ENCODE measurements at regions of chr12 and their contacts with region 1.

Region 1: GRCh38 chr12:123365025-123365917 is 624 bp upstream of the SBNO1 start:
- DNase-seq: peak; percentile 98
- H3K4me3 Mint-ChIP-seq: peak overlapping the region; percentile 85
- H3K27ac Mint-ChIP-seq: peak overlapping the region; percentile 94
- H3K4me1 Mint-ChIP-seq: no peaks in the 10 kb centered on the region
- H3K27me3 Mint-ChIP-seq: no peaks in the 10 kb centered on the region
- CTCF ChIP-seq: peak; percentile 59

Region 2: GRCh38 chr12:123271001-123271729 is 94.1 kb before region 1 on chr12:
- CTCF ChIA-PET with region 1: interaction called, 8 read pairs
- POLR2A ChIA-PET with region 1: interaction called, 3 read pairs
- intact Hi-C with region 1: loop called (anchors 2 kb)
- DNase-seq: peak; percentile 64
- H3K4me3 Mint-ChIP-seq: peak overlapping the region; percentile 80
- H3K27ac Mint-ChIP-seq: no peak overlapping the region
- H3K4me1 Mint-ChIP-seq: peaks cover 11% of the 10 kb centered on the region
- H3K27me3 Mint-ChIP-seq: no peaks in the 10 kb centered on the region
- CTCF ChIP-seq: peak; percentile 64

Region 3: GRCh38 chr12:123354600-123354999 is 10.7 kb before region 1 on chr12:
- CTCF ChIA-PET with region 1: interaction called, 3 read pairs
- POLR2A ChIA-PET with region 1: interaction called, 14 read pairs
- intact Hi-C with region 1: no loop called
- DNase-seq: no peak
- H3K4me3 Mint-ChIP-seq: no peak overlapping the region
- H3K27ac Mint-ChIP-seq: no peak overlapping the region
- H3K4me1 Mint-ChIP-seq: peaks cover 6% of the 10 kb centered on the region
- H3K27me3 Mint-ChIP-seq: no peaks in the 10 kb centered on the region
- CTCF ChIP-seq: no peak

Region 4: DNA sequence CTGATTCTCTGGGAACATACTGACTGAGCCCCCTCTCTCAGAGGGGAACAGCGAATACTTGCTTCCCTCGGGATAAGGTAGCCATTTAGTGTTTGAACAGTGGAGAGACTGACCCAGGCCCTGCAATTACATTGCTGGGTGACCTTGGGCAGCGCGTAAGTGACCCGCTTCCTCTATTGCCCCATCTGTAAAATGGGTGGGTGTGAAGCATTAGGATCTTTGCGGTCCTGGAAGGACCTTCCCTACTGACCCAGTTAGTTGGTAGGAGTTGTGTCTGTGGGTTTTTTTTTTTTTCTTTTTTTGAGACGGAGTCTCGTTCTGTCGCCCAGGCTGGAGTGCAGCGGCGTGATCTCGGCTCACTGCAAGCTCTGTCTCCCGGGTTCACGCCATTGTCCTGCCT is 17.4 kb after region 1 on chr12:
- CTCF ChIA-PET with region 1: interaction called, 9 read pairs
- POLR2A ChIA-PET with region 1: interaction called, 127 read pairs
- intact Hi-C with region 1: loop called (anchors 1 kb)
- DNase-seq: no peak
- H3K4me3 Mint-ChIP-seq: peak overlapping the region; percentile 91
- H3K27ac Mint-ChIP-seq: no peak overlapping the region
- H3K4me1 Mint-ChIP-seq: peaks cover 9% of the 10 kb centered on the region
- H3K27me3 Mint-ChIP-seq: no peaks in the 10 kb centered on the region
- CTCF ChIP-seq: no peak

Region 5: DNA sequence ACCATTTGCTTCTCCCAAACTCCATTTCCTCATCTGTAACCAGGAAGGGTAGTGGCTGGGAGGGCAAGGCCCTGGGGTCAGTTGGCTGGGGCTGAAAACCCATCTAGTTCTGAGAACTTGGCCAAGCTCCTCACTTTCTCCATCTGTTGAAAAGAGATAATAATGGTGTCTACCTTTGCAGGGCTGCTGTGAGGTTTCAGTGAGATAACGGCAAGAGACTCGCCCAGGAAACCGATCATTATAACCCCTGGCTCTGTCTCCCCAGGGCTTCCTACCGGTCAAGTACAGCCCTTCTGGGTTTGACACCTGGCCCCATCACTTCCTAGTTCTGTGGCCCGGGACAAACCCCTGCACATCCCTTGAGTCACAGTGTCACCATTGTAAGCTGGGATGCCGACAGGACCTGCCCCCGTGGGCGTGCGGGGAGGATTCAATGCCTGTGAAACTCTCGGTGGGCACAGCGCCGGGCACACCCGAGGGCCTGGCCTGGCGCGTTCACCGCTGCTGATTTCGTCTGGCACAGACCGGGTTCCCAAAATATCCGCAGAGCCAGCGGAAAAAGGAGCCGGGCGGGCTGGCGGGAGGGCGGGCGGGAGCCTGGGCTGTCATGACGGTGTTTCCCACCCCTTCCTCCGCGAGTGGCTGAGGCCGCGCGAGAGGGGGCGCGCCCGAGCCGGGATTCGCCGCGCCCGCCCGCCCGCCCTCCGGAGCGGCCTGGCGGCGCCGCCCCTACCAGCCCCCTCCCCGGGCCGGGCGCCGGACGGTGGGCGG is 23.1 kb after region 1 on chr12:
- CTCF ChIA-PET with region 1: interaction called, 9 read pairs
- POLR2A ChIA-PET with region 1: interaction called, 127 read pairs
- intact Hi-C with region 1: loop called (anchors 1 kb)
- DNase-seq: peak; percentile 71
- H3K4me3 Mint-ChIP-seq: peak overlapping the region; percentile 68
- H3K27ac Mint-ChIP-seq: no peak overlapping the region
- H3K4me1 Mint-ChIP-seq: peaks cover 21% of the 10 kb centered on the region
- H3K27me3 Mint-ChIP-seq: no peaks in the 10 kb centered on the region
- CTCF ChIP-seq: no peak

Region 6: GRCh38 chr12:123457980-123458783 is 92.9 kb after region 1 on chr12 and contains the start of gene SNRNP35:
- CTCF ChIA-PET with region 1: interaction called, 3 read pairs
- POLR2A ChIA-PET with region 1: interaction called, 10 read pairs
- intact Hi-C with region 1: no loop called
- DNase-seq: peak; percentile 81
- H3K4me3 Mint-ChIP-seq: peak within 1 kb of the TSS; percentile 97
- H3K27ac Mint-ChIP-seq: peak within 1 kb of the TSS; percentile 99
- H3K4me1 Mint-ChIP-seq: peaks cover 14% of the 10 kb centered on the region
- H3K27me3 Mint-ChIP-seq: no peaks in the 10 kb centered on the region
- CTCF ChIP-seq: no peak
- total RNA-seq, gene SNRNP35: 18.0 and 24.7 TPM in 2 replicates

Region 7: GRCh38 chr12:123601602-123602489 is 236.6 kb after region 1 on chr12 and contains the start of gene DDX55:
- CTCF ChIA-PET with region 1: interaction called, 4 read pairs
- POLR2A ChIA-PET with region 1: interaction called, 18 read pairs
- intact Hi-C with region 1: no loop called
- DNase-seq: peak; percentile 82
- H3K4me3 Mint-ChIP-seq: peak within 1 kb of the TSS; percentile 98
- H3K27ac Mint-ChIP-seq: peak within 1 kb of the TSS; percentile 92
- H3K4me1 Mint-ChIP-seq: peaks cover 23% of the 10 kb centered on the region
- H3K27me3 Mint-ChIP-seq: no peaks in the 10 kb centered on the region
- CTCF ChIP-seq: peak; percentile 42
- total RNA-seq, gene DDX55: 28.4 and 30.5 TPM in 2 replicates

Measured in MCF 10A (cell line).